AG04449 (cell line): ENCODE measurements at regions of chr12 and their contacts with region 1.

Region 1: DNA sequence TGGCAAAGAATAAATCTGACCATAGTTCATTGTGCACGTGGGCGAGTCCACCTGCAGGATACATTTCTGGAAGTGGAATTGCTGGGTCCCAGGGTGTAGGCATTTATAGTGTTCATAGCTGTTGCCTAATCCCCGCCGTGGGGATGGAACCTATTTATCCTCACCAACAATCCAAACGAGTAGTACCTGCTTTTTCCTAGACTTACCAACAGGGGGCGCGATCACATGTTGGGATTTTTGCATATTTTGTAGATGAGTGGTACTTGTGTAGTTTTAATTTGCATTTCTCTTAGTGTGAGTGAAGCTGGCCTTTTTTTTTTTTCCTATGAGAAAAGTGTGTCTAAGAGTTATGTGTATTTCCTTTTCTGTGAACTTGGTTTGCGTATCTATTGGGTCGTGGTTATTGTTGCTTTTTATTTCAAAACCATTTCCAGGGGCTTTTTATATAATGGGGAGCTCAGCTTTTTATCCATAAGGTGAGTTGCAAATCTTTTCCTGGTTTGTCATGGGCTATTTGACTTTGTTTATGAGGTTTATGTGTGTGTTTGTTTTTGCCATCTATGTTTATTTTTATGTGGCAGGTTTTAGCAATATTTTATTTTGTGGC is 67.2 kb downstream of the CCDC92 start:
- DNase-seq: no peak
- H3K4me3 ChIP-seq: no peak overlapping the region
- CTCF ChIP-seq: peak; percentile 67

Region 2: DNA sequence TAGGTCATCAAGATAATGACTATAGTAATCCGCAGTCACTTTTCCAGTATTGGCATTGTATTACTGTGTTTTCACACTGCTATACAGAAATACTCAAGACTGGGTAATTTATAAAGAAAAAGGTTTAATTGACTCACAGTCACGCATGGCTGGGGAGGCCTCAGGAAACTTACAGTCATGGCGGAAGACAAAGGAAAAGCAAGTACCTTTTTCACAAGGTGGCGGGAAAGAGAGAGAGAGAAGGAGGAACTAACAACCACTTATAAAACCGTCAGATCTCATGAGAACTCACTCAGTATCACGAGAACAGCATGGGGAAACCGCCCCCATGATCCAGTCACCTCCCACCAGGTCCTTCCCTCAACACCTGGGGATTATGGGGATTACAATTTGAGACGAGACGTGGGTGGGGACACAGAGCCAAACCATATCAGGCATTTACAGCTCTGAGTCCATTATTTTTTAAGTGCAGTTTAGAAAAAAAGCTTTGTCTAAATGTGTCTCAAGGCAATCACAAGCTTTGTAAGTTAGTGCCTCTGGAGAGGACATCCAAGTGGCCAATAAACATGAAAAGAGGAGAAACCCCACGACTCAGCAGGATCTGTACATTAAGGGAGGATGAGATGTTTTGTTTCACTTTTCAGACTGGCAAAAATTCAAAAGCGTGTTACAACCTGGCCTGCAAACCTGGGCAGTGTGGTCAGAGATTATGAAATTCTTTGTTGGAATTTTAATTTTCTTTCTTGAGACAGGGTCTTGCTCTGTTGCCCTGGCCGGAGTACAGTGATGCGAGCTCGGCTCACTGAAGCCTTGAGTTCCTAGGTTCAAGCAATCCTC is 61.3 kb before region 1 on chr12:
- CTCF ChIA-PET with region 1: no interaction called
- POLR2A ChIA-PET with region 1: no interaction called
- DNase-seq: no peak
- H3K4me3 ChIP-seq: no peak overlapping the region
- CTCF ChIP-seq: no peak

Region 3: DNA sequence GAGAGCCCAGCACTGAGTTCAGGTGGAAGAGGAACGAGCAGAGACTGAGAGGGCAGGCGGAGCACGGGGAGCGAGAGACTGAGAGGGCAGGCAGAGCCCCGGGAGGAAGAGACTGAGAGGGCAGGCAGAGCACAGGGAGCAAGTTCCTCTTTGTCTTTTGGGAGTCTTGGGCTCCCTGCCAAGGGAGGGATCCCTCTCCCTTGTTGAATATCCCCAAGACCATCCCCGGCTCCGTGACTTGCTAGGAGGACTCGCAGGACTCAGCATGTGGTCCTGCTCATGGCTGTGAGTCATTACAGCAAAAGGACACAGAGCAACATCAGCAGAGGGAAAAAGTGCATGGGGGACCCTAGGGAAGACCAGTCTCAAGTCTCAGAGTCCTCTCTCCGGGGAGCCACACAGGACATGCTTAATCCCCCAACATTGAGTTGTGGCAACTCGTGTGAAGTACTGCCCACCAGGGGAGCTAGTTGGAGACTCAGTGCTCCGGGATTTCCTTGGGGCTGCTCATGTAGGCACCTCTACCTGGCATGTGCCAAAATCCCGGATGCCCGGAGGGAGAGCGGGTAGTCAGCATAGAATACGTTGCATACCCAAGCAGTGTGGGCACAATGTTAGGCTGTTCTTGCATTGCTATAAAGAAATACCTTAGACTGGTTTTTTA is 13.8 kb before region 1 on chr12:
- CTCF ChIA-PET with region 1: interaction called, 18 read pairs
- POLR2A ChIA-PET with region 1: no interaction called
- DNase-seq: no peak
- H3K4me3 ChIP-seq: no peak overlapping the region
- CTCF ChIP-seq: no peak

Region 4: DNA sequence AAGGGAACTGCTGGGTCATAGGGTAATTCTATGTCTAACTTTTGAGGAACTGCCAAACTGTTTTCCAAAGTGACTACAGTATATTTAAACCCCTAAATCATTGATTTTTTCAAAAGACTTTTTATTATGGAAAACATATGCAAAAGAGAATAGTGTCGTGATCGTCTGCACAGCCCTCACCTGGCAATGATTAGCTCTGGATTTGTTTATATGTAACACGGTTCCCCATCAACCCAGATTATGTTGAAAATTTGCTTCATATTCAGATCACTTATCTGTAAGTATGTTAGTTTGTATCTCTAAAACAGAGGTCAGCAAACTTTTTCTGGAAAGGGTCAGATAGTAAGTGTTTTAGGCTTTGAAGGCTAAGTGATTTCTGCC is 14.5 kb after region 1 on chr12:
- CTCF ChIA-PET with region 1: interaction called, 36 read pairs
- POLR2A ChIA-PET with region 1: no interaction called
- DNase-seq: no peak
- H3K4me3 ChIP-seq: no peak overlapping the region
- CTCF ChIP-seq: no peak

Region 5: GRCh38 chr12:123938679-123939480 is 33.5 kb after region 1 on chr12:
- CTCF ChIA-PET with region 1: interaction called, 22 read pairs
- POLR2A ChIA-PET with region 1: no interaction called
- DNase-seq: no peak
- H3K4me3 ChIP-seq: no peak overlapping the region
- CTCF ChIP-seq: peak; percentile 58

Region 6: GRCh38 chr12:123966596-123966995 is 61.2 kb after region 1 on chr12:
- CTCF ChIA-PET with region 1: interaction called, 14 read pairs
- POLR2A ChIA-PET with region 1: no interaction called
- DNase-seq: peak; percentile 52
- H3K4me3 ChIP-seq: no peak overlapping the region
- CTCF ChIP-seq: no peak

Region 7: GRCh38 chr12:123983822-123984485 is 78.5 kb after region 1 on chr12:
- CTCF ChIA-PET with region 1: interaction called, 51 read pairs
- POLR2A ChIA-PET with region 1: no interaction called
- DNase-seq: no peak
- H3K4me3 ChIP-seq: no peak overlapping the region
- CTCF ChIP-seq: peak; percentile 64